Ascending aorta (tissue), 2 donors: ENCODE measurements at regions of chr1 and their contacts with region 1.

Region 1: DNA sequence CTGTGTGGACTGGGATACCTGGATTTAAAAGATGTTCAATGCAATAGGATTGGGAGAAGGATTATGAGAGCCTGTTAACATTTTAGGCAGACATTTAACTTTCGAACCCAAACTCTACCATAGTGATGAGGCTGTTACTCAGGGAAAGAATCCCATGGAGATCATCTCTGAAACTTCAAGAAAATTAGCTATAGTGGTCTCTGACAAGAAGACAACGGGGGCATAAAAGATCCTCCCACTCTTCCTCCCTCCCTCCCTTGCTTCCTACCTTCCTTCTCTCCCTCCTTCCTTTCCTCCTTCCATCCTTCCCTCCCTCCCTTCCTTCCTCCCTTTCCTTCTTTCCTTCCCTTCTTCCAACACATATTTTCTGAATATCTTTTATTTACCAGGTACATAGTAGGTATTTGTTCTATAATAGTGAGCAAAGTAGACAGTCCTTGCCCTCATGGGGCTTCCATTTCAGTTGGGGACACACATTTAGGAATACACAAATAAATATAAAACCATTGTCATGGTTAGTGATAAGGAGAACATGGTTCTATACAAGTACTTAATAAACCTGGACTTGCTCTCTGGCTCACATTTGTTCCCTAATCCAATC is 143.2 kb downstream of the ATP6V1G3 start:
- DNase-seq: no peak
- H3K4me3 ChIP-seq: no peak overlapping the region
- H3K27ac ChIP-seq: no peak overlapping the region
- H3K4me1 ChIP-seq: no peaks in the 10 kb centered on the region
- H3K27me3 ChIP-seq: no peaks in the 10 kb centered on the region
- CTCF ChIP-seq: no peak

Region 2: DNA sequence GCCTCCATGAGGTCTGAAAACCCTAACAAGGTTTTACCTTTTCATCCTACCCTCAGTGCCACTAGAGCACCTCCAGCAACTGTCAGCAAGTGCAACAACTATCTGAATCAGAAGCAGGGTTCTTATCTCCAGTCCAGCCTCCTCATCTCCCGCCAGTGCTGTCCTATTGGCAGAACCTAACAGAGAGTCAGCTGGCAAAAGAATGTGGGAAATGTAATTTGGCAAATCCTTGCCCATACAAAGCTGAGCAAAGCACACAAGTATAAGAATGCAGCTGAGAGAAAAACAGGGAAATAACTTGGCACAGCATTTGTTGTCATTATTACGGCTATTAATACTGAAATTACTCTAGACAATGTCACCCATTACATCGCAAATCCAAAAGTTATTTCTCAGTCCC is 19.0 kb after region 1 on chr1:
- intact Hi-C with region 1: loop called (anchors 2 kb)
- DNase-seq: no peak
- H3K4me3 ChIP-seq: no peak overlapping the region
- H3K27ac ChIP-seq: no peak overlapping the region
- H3K4me1 ChIP-seq: no peaks in the 10 kb centered on the region
- H3K27me3 ChIP-seq: no peaks in the 10 kb centered on the region
- CTCF ChIP-seq: no peak